IMR-90 (cell line): ENCODE measurements at regions of chr11 and their contacts with region 1.

Region 1: GRCh38 chr11:60775420-60775961 is 9.6 kb upstream of the MS4A10 start:
- DNase-seq: peak; percentile 86
- ATAC-seq: peak; percentile 97
- H3K4me3 ChIP-seq: no peak overlapping the region
- H3K27ac ChIP-seq: no peak overlapping the region
- H3K4me1 ChIP-seq: no peaks in the 10 kb centered on the region; the same call in 1 of the 2 replicates
- H3K27me3 ChIP-seq: peaks cover 7% of the 10 kb centered on the region
- CTCF ChIP-seq: peak; percentile 93
- POLR2A ChIP-seq: no peak
- RAD21 ChIP-seq: peak; percentile 87

Region 2: DNA sequence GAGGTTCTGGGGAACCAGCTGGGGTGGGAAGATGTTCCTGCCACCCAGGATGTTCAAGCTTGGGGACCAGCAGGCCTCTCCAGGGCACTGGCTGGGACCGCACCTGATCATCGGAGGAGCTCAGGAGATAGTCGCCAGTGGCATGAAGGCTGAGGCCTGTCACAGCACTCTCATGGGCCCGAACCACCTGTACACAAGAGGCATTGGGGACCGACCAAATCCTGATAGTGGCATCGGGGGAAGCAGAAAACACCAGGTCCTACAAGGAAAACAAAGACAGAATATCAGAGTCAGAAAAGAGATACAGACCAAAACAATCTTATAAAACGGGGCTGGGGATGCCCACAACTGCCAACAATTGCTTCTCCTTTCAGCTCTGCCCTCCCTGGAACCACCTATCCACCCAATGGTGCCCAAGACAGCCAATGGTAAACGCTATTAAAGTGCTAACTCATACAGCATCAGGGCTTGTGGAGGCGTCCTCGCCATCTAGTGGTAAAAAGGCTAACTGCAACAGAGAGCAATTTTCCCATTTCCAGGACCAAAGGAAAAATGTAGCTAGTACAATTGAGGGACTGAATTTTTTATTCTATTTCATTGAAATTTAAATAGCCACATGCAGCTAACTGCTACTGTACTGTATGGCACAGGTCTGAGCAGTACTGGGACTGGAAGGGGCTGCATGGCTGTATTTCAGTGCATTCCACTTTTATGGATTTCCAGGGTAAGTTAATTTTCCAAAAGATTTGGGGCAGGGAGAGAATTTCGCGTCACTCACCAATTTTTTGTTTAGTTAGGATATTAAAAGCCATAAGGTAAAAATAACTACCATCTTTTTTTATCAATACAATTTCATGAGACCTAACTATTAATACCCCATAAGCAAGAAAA is 123.8 kb after region 1 on chr11:
- CTCF ChIA-PET with region 1: interaction called, 3 read pairs
- POLR2A ChIA-PET with region 1: no interaction called
- dilution Hi-C with region 1: no loop called
- in situ Hi-C with region 1: loop called (anchors 5 kb)
- intact Hi-C with region 1: loop called (anchors 1 kb)
- DNase-seq: peak; percentile 73
- ATAC-seq: peak; percentile 99
- H3K4me3 ChIP-seq: no peak overlapping the region
- H3K27ac ChIP-seq: no peak overlapping the region
- H3K4me1 ChIP-seq: no peaks in the 10 kb centered on the region
- H3K27me3 ChIP-seq: no peaks in the 10 kb centered on the region
- CTCF ChIP-seq: peak; percentile 93
- POLR2A ChIP-seq: no peak
- RAD21 ChIP-seq: peak; percentile 76

Region 3: DNA sequence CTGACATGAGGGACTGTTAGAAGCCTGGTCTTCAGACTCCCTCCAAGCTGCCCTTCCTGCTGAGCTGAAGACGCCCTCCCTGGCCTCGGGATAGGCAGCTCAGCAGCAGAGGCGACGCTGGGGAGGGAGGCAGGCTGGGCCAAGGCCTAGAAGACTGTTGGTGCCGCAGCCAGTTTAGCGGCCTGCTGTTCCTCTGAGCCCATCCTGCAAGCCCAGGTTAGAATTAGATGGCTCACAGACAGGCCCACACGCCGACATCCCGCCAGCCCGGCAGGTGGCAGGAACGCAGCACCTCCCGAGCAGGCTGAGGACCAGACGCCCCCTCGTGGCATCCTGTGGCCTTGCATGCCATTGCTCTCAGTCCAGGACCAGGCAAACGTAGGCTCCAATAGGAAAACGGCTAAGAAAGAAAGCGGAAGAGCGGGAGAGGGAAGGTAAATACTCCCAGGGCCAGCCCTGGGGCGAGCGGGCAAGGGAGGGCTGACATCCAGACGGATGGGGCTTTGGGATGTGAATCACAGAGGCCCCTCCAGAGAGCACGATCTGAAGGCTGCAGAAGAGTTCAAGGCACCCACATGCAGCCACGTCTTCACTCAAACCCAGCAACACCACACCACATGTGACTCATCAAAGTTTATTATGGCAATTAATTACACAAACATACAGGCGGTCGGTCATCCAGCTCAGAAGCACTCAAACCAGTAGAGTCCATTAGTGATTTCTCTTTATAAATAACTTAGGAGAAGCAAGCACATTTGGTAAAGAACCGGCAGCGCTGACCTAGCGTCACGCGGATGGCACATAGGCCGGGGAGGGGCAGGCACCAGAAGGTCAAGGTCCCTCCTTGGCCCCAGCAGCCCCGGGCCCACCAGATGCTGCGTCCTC is 354.4 kb after region 1 on chr11:
- CTCF ChIA-PET with region 1: no interaction called
- POLR2A ChIA-PET with region 1: no interaction called
- dilution Hi-C with region 1: no loop called
- in situ Hi-C with region 1: no loop called
- intact Hi-C with region 1: loop called (anchors 1 kb)
- DNase-seq: peak; percentile 93
- ATAC-seq: peak; percentile 96
- H3K4me3 ChIP-seq: peak overlapping the region; percentile 11; the same call in 1 of the 2 replicates
- H3K27ac ChIP-seq: peak overlapping the region; percentile 18
- H3K4me1 ChIP-seq: peaks cover 10% of the 10 kb centered on the region
- H3K27me3 ChIP-seq: peaks cover 5% of the 10 kb centered on the region; the same call in 1 of the 2 replicates
- CTCF ChIP-seq: peak; percentile 100
- POLR2A ChIP-seq: peak; percentile 39; the same call in 1 of the 2 replicates
- RAD21 ChIP-seq: peak; percentile 93